Dorsolateral prefrontal cortex (tissue), 120 donors: ENCODE measurements at regions of chrX and their contacts with region 1.

Region 1: DNA sequence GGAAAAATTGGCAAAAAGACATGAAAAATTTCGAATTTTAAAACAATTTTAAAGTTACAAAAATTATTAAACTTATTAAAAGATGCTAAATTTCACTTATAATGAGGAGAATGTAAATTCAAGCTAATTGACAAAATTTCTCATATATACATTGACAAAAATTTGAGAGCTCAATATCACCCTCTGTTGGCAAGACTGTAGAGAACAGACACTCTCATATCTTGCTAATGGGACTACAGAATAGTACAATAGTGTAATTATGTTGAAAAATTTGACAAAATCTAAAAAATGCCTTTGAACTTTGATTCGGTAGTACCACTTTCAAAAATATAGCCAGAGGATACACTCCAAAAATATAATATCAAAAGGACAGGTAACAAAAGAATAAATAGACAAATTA is 29.8 kb downstream of the DCAF8L2 start:
- DNase-seq: no peak
- H3K4me3 ChIP-seq: no peak overlapping the region
- H3K27ac ChIP-seq: no peak overlapping the region
- H3K27me3 ChIP-seq: peaks cover 0 to 68% (median 15%) of the 10 kb centered on the region in 45 donors
- CTCF ChIP-seq: peak in 38 of 56 donors; percentile 8 to 54 (median 31)

Region 2: GRCh38 chrX:27599928-27600327 is 20.0 kb before region 1 on chrX:
- intact Hi-C with region 1: loop called in 1 of 2 experiments (anchors 2 kb)
- DNase-seq: no peak
- H3K4me3 ChIP-seq: no peak overlapping the region
- H3K27ac ChIP-seq: no peak overlapping the region
- H3K27me3 ChIP-seq: peaks cover 0 to 66% (median 8%) of the 10 kb centered on the region in 45 donors
- CTCF ChIP-seq: peak in 1 of 56 donors; percentile 13